ENCODE measurements at regions of chr17 and their contacts with region 1.

Region 1: DNA sequence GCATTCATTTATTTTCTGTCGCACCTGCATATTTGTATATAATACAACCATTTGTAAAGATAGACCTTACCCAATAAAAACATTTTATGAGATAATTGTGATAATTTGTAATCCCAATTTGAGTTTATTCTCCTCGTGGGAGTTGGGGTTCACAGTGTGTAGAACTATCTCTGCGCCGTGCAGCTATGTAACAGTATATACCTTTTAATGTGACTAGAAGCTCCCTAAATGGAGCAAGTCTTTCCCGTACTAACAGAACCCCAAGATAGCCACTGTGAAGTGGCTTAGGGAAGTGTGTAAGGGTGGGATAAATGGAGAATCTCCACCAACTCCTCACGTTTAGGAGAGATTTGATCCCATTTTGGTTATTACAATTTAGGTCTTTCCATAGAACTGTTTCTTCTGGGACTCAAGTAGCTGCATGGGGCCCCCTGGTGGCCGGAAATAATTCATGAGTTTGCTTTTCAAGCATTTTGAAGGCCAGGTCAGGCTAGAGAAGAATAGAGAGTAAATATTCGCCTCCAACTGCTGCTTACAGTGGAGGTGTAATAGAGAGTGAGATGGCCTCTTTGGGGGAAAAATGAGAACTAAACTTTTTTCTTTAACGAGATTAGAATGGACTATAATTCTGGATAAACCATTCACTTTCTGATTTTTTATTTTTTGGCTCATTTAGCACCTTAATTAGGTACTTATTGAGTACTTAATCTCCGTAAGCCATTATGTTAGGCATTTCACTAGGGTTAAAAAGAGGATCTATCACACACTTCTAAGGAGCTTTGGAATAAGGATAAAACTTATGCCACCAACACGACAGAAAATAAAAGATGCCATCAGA is 4.5 kb downstream of the TMEM100 start:
- DNase-seq: peak; percentile 67 to 88
- H3K4me3 ChIP-seq: no peak overlapping the region
- H3K27ac ChIP-seq: no peak overlapping the region
- H3K4me1 ChIP-seq: peaks cover 0 to 4% (median 3%) of the 10 kb centered on the region in 4 experiments; a peak in 4 of 7 replicates
- H3K27me3 ChIP-seq: no peaks in the 10 kb centered on the region
- CTCF ChIP-seq: peak in 2 of 3 experiments; percentile 64 to 68; a peak in 3 of 4 replicates
- EP300 ChIP-seq: no peak
- POLR2A ChIP-seq: no peak
- RAD21 ChIP-seq: peak; percentile 68 to 78

Region 2: DNA sequence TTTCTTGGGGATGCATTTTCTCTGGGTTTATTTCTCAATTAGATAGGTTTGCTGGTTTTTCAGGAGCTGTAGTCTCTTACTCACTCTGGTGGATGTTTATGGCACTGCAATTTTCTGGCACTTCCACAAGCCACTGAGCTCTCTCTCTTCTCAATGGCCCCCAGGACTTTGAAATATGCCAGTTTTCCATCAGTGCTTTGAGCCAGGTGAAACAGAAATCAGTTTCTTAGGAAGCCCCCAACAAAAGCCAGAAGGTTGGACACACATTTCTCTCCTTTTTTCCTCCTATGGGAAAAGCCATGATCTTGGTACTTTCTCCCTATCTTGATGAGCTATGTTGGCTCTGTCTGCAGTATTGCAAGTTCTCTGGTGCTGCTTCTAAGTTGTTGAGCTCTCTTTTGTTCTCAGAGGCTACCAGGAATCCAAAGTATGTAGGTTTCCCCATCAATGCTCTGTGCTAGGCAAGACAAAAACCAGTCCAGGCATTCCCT is 116.2 kb before region 1 on chr17:
- CTCF ChIA-PET with region 1: interaction called, 14 read pairs
- POLR2A ChIA-PET with region 1: interaction called, 7 read pairs
- DNase-seq: peak; percentile 21 to 58
- H3K4me3 ChIP-seq: peak overlapping the region in 1 of 4 experiments; percentile 37; a peak in 1 of 8 replicates
- H3K27ac ChIP-seq: no peak overlapping the region
- H3K4me1 ChIP-seq: peaks cover 0 to 3% (median under 1%) of the 10 kb centered on the region in 4 experiments; a peak in 3 of 7 replicates
- H3K27me3 ChIP-seq: no peaks in the 10 kb centered on the region
- CTCF ChIP-seq: peak in 2 of 3 experiments; percentile 72 to 78; a peak in 3 of 4 replicates
- EP300 ChIP-seq: no peak
- POLR2A ChIP-seq: no peak; a peak in 1 of 3 replicates
- RAD21 ChIP-seq: peak; percentile 77 to 83

Region 3: DNA sequence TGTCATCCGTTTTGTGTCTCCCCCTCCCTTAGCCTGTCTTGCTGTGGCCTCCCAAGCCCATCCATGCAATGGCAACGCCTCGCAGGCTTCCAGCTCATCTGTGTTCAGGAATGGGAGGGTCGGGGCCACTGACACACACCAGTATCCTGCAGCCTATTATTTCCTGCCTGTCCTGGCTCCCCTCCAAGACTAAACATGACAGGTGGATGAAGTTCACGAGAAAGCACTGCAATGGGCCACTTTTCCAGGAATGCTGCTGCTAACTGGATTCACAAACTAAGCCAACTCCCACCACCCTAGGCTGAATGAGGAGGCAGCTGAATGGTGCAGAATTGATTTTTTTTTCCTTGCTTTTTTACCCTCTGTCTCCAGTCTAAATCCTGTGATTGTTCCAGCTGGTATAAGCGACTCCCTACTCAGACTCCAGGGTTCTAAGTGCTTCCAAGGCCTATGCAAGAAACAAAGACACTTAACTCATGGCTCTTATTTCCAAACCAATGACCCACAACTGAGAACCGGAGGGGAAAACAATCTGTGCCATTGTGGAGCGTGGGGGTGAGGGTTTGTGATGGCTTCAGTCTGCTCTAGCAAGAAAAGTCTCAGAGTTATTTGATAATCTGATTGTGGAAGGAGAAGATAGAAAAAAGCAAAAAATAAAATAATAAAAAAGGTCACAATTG is 18.8 kb before region 1 on chr17:
- CTCF ChIA-PET with region 1: interaction called, 15 read pairs
- POLR2A ChIA-PET with region 1: no interaction called
- DNase-seq: no peak
- H3K4me3 ChIP-seq: no peak overlapping the region
- H3K27ac ChIP-seq: no peak overlapping the region
- H3K4me1 ChIP-seq: peaks cover 0 to 2% (median 0%) of the 10 kb centered on the region in 4 experiments; a peak in 2 of 7 replicates
- H3K27me3 ChIP-seq: no peaks in the 10 kb centered on the region
- CTCF ChIP-seq: no peak
- EP300 ChIP-seq: no peak
- POLR2A ChIP-seq: no peak
- RAD21 ChIP-seq: no peak

Region 4: DNA sequence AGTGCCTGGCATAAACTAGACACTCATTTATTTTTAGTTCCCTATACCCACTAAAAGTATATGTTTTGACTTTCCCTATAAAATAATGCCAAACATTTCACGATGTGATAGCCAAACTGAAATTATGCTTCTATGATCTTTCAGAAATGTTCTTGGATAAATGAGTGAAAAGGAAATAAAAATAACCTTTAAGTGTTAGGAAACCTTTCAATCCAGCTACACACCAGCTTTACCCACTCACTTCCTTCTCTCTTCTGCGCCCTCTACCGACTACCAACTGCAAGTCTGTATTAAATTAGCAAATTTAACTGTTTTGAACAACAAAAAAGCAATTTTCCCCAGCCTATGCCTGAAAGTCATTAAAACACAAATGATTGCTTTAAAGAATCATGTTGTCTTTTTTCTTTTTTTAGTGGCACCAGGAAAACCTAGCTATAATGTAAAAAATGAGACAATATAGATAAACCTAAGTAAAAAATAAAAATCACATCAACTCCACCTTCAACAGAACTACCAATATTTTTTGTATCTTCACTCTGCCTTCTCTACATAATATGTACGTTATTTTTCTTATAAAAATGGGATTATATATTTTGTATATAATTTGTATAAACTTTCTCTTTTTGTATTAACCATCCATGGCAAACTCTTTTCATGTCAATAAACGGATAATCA is 17.8 kb after region 1 on chr17:
- CTCF ChIA-PET with region 1: interaction called, 61 read pairs
- POLR2A ChIA-PET with region 1: no interaction called
- DNase-seq: no peak
- H3K4me3 ChIP-seq: no peak overlapping the region
- H3K27ac ChIP-seq: no peak overlapping the region
- H3K4me1 ChIP-seq: peaks cover 1 to 16% (median 15%) of the 10 kb centered on the region in 4 experiments; a peak in 4 of 7 replicates
- H3K27me3 ChIP-seq: no peaks in the 10 kb centered on the region
- CTCF ChIP-seq: peak in 2 of 3 experiments; percentile 64 to 72; a peak in 3 of 4 replicates
- EP300 ChIP-seq: no peak
- POLR2A ChIP-seq: no peak
- RAD21 ChIP-seq: peak; percentile 46 to 57

Region 5: GRCh38 chr17:55770148-55770870 is 52.2 kb after region 1 on chr17:
- CTCF ChIA-PET with region 1: interaction called, 50 read pairs
- POLR2A ChIA-PET with region 1: no interaction called
- DNase-seq: no peak
- H3K4me3 ChIP-seq: no peak overlapping the region
- H3K27ac ChIP-seq: no peak overlapping the region
- H3K4me1 ChIP-seq: no peaks in the 10 kb centered on the region
- H3K27me3 ChIP-seq: no peaks in the 10 kb centered on the region
- CTCF ChIP-seq: peak in 2 of 3 experiments; percentile 11 to 69; a peak in 2 of 4 replicates
- EP300 ChIP-seq: no peak
- POLR2A ChIP-seq: no peak
- RAD21 ChIP-seq: peak; percentile 78

Region 6: GRCh38 chr17:55794725-55795482 is 76.8 kb after region 1 on chr17:
- CTCF ChIA-PET with region 1: no interaction called
- POLR2A ChIA-PET with region 1: no interaction called
- DNase-seq: no peak
- H3K4me3 ChIP-seq: no peak overlapping the region
- H3K27ac ChIP-seq: no peak overlapping the region
- H3K4me1 ChIP-seq: peaks cover 0 to 5% (median 2%) of the 10 kb centered on the region in 4 experiments; a peak in 3 of 7 replicates
- H3K27me3 ChIP-seq: no peaks in the 10 kb centered on the region
- CTCF ChIP-seq: no peak
- EP300 ChIP-seq: no peak
- POLR2A ChIP-seq: no peak
- RAD21 ChIP-seq: no peak